Heart left ventricle (tissue), 16 donors: ENCODE measurements at regions of chr7 and their contacts with region 1.

Region 1: GRCh38 chr7:10412422-10413019 is 561.2 kb upstream of the PHF14 start:
- DNase-seq: peak in 1 of 5 donors; percentile 16
- ATAC-seq: no peak
- H3K4me3 ChIP-seq: no peak overlapping the region
- H3K27ac ChIP-seq: no peak overlapping the region
- H3K4me1 ChIP-seq: no peaks in the 10 kb centered on the region
- H3K27me3 ChIP-seq: no peaks in the 10 kb centered on the region
- CTCF ChIP-seq: peak; percentile 61 to 86 (median 72)
- POLR2A ChIP-seq: no peak

Region 2: DNA sequence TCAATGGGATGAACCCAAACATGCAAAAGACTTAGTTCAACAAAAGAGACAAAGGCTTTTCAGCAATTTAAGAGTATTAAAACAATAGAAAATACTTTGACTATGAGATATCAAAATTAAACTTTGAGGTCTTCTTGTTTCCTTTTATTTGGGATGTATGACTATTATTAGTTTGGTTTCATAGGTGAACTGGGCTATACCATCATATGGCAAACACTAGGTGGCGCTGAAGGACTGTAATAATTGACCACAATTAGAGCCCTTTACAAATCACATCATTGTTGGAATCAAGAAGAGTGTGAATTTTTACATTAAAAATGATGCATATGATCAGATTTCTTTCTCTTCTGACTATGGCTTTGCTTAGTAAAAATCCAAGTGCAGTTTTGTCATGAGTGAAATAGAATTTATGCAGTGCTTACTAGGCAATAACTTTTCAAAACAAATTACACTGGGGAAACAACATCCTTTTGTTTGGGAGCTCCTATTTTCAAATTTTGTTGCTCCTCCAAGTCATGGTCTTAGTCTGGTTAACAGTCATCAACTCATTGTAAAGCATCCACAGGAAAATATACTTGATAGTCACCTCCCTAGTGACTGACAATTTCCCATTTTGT is 1993.8 kb before region 1 on chr7:
- intact Hi-C with region 1: loop called in 2 of 10 experiments (anchors 5 to 10 kb)
- DNase-seq: peak in 3 of 5 donors; percentile 23 to 38 (median 33)
- ATAC-seq: peak in 1 of 4 donors; percentile 62
- H3K4me3 ChIP-seq: no peak overlapping the region
- H3K27ac ChIP-seq: no peak overlapping the region
- H3K4me1 ChIP-seq: no peaks in the 10 kb centered on the region
- H3K27me3 ChIP-seq: peaks cover 0 to 20% (median 0%) of the 10 kb centered on the region in 9 donors
- CTCF ChIP-seq: peak; percentile 59 to 83 (median 74)
- POLR2A ChIP-seq: no peak

Region 3: GRCh38 chr7:10022957-10023356 is 389.6 kb before region 1 on chr7:
- intact Hi-C with region 1: loop called in 9 of 10 experiments (anchors 1 to 5 kb)
- DNase-seq: peak in 1 of 5 donors; percentile 9
- ATAC-seq: peak in 2 of 4 donors; percentile 62 to 65
- H3K4me3 ChIP-seq: no peak overlapping the region
- H3K27ac ChIP-seq: no peak overlapping the region
- H3K4me1 ChIP-seq: no peaks in the 10 kb centered on the region
- H3K27me3 ChIP-seq: no peaks in the 10 kb centered on the region
- CTCF ChIP-seq: peak in 11 of 12 donors; percentile 18 to 62 (median 46)
- POLR2A ChIP-seq: no peak

Region 4: DNA sequence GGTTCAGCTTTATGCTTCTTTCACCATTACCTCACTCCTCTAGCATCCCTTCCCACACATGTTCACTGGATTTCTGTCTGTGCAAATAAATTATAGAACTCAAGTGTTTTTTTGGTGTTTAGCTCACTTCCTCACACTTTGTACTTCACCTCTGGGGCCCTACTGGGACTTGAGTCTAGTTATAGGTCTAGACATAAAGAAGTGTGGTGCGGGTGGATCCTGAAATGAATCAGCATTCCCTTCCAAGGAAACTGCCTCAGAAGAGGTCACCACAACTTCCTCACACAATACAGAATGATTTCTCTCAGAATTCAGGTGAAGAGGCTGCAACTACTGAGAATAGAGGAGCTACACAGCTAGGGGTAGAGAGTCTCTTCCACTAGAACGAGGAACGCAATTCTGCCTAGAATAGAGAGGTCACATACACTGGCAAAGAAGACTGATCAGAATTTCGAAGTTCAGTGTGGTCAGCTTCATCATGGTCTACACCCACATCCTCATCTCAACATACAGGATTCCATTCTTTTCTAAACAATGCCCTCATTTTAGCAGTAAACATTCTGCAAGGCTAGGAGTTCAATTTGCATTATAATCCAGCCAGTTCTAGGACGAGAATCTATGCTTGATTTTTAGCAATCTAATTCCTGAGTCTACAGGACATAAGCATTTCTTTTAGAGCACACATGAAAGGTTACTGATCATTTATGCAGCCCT is 377.5 kb before region 1 on chr7:
- intact Hi-C with region 1: loop called in 1 of 10 experiments (anchors 5 kb)
- DNase-seq: no peak
- ATAC-seq: no peak
- H3K4me3 ChIP-seq: no peak overlapping the region
- H3K27ac ChIP-seq: no peak overlapping the region
- H3K4me1 ChIP-seq: no peaks in the 10 kb centered on the region
- H3K27me3 ChIP-seq: no peaks in the 10 kb centered on the region
- CTCF ChIP-seq: no peak
- POLR2A ChIP-seq: no peak

Region 5: DNA sequence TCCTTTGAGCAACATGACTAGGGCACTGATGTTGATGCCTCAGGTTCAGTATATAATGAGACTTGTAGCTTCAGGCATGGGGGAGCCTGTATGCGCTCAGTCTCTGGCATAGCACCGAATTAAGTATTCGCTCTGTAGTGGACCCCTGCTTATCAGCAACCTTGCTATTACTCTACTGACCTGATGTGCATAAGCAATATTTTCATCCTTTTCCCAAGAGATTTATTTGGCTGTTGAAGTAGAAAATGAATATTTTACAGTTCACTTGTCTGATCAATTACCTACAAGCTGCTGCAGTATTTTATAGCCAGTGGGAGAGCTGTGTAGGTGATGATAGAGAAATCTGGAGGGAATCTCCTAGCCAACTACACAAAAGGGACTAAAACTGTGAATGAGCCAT is 220.4 kb before region 1 on chr7:
- intact Hi-C with region 1: no loop called
- DNase-seq: no peak
- ATAC-seq: no peak
- H3K4me3 ChIP-seq: no peak overlapping the region
- H3K27ac ChIP-seq: no peak overlapping the region
- H3K4me1 ChIP-seq: no peaks in the 10 kb centered on the region
- H3K27me3 ChIP-seq: no peaks in the 10 kb centered on the region
- CTCF ChIP-seq: no peak
- POLR2A ChIP-seq: no peak

Region 6: DNA sequence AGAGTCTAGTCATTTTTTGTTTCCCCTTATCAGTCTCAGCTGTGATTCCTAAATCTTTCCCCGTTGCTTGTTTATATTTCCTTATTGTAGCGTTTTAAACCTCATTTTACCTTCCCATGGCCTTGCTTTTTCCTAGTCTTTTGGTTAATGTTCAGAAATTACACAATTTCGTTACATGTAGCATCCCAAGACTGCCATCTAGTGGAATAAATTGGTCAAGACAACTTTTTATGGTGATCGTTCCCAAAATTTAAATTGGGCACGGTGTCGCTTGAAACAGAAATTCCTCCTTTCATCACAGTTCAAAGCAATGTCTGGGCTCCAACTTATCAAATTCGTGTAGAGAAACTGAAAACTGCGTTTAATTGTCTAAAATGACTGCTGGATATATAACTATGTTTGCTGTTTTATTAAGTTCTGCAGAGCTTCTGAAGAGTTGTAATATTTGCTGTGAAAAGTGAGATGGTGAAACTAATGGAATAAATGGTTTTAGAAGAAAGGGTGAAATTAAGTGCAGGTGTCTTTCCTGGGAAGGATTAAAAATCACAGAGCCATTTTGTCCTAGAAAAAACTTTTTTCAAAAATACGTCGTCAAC is 931.4 kb after region 1 on chr7:
- intact Hi-C with region 1: loop called in 1 of 10 experiments (anchors 10 kb)
- DNase-seq: no peak
- ATAC-seq: no peak
- H3K4me3 ChIP-seq: peak overlapping the region in 1 of 12 donors; percentile 29
- H3K27ac ChIP-seq: no peak overlapping the region
- H3K4me1 ChIP-seq: peaks cover 0 to 5% (median 0%) of the 10 kb centered on the region in 12 donors
- H3K27me3 ChIP-seq: no peaks in the 10 kb centered on the region
- CTCF ChIP-seq: peak; percentile 54 to 81 (median 74)
- POLR2A ChIP-seq: no peak